Mucosa of descending colon (tissue), 3 donors: ENCODE measurements at regions of chr7 and their contacts with region 1.

Region 1: DNA sequence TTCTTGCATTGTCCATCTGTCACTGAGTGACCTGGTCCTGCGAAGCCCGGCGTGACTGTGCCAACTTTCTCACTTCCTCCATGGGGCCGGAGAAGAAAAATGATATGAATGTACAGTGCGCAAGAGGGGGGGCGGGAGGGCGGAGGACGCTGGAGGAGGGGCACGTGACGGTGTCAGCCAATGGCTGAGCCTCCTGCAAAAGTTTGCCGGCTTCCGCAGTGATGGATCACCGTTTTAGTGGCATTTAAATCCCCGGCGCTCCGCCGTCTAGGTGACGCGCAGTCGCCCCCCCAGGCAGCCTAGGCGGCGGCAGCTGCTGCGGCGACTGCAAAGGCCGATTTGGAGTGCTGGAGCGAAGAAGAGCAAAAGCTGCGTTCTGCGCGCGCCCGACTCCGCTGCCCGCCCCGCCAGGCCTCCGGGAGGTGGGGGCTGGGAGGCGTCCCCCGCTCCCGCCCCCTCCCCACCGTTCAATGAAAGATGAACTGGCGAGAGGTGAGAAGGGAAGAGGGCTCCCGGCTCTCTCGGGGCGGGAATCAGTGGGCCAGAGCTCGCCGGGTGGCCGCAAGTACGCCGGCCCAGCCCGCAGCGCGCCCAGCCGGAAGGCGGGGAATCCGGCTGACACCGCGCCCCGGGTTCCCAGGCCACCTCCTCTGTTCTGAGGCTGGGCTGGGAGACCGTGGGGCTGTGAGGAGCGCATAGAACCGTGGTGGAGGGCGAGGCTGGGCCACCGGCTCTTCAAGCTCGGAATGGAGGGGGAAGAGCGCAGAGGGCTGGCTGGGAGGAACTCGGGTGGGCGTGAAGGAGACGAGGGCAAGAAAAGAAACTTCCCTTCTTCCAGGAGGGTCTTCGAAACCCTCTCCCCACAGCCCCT is at the start of gene HOXA1:
- DNase-seq: peak; percentile 90 to 92 (median 91)
- ATAC-seq: peak; percentile 82
- H3K4me3 ChIP-seq: peak within 1 kb of the TSS; percentile 85
- H3K4me1 ChIP-seq: peaks cover 22% of the 10 kb centered on the region
- CTCF ChIP-seq: no peak
- total RNA-seq, gene HOXA1: 1.5 to 2.7 (median 2.1) TPM

Region 2: GRCh38 chr7:26864309-26865093 is 231.6 kb before region 1 on chr7 and contains the start of gene SKAP2:
- intact Hi-C with region 1: loop called in 1 of 2 experiments (anchors 10 kb)
- DNase-seq: peak; percentile 99
- ATAC-seq: peak; percentile 96
- H3K4me3 ChIP-seq: peak within 1 kb of the TSS; percentile 54
- H3K4me1 ChIP-seq: peaks cover 20% of the 10 kb centered on the region
- CTCF ChIP-seq: no peak
- total RNA-seq, gene SKAP2: 36.5 to 51.7 (median 40.3) TPM

Region 3: DNA sequence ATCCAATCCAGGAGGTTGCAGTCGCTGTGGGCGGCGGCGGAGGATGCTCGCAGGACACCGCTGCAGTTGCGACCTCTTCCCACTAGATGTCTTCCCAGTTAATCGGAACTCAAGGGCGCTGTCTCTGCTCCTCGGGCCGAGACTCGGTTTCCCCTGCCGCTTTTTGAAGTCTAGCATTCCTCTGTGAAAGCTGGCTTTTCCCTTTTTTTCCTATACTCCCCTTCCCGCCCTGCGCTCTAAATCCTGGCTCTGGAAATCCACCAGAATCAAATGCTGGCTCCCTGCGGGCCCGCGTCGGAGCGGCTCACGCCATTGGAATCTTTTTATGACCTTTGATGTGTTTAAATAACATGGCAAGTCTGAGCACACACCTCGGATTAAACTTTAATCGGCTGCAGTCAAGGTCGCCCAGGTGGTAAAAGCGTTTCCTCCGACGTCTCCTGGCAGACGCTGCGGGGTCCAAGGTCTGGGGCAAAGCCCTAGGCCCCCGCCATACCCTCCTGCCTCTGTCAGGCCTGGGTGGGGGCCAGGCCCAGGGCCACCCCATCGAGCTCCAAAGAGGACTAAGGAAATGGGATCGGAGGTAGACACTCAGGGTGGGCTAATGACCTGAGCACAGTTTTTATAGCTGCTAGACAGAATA is 114.4 kb after region 1 on chr7:
- intact Hi-C with region 1: no loop called
- DNase-seq: peak; percentile 80 to 91 (median 88)
- ATAC-seq: peak; percentile 82
- H3K4me3 ChIP-seq: no peak overlapping the region
- H3K4me1 ChIP-seq: peaks cover 20% of the 10 kb centered on the region
- CTCF ChIP-seq: peak; percentile 58